Right cardiac atrium (tissue), 5 donors: ENCODE measurements at regions of chr16 and their contacts with region 1.

Region 1: DNA sequence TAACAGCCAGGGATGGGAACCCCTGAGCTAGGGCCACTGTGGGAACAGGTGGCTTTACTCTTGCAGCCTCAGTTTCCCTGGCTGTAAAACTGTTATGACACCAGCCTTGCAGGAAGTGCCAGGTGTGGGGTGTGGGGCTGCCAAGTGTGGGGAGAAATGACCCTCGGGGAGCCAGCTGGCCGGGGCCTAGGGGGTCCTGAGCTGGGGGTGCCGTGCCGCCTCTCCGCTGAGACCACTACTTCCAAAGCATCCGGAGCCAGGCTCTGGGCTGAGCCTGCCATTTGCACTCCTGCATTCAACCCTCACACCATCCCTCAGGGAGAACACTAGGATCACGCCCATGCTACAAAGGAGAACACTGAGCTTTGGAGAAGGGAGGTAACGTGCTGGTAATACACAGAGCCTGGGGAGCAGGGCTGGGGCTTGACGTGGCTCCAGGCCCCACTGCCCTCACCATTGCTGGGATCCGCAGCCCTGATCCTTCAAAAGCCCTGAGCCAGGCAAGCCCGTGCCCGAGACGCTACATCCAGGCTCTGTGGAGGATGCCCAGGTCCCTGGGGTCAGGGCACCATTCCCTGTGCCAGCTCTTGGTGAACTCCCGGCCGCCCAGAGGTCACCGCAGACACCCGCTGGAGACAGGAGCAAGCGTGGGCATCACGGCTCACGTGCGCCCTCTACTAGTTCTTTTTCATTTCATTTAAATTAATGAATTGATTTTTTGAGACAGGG is 28.8 kb upstream of the GINS2 start:
- DNase-seq: peak; percentile 63 to 84 (median 82)
- ATAC-seq: peak; percentile 49 to 68
- H3K4me3 ChIP-seq: no peak overlapping the region
- H3K27ac ChIP-seq: no peak overlapping the region
- H3K4me1 ChIP-seq: no peaks in the 10 kb centered on the region
- H3K27me3 ChIP-seq: no peaks in the 10 kb centered on the region

Region 2: GRCh38 chr16:85114909-85115567 is 602.5 kb before region 1 on chr16:
- intact Hi-C with region 1: loop called in 1 of 4 experiments (anchors 10 kb)
- DNase-seq: peak; percentile 87 to 96 (median 95)
- ATAC-seq: peak; percentile 84 to 87
- H3K4me3 ChIP-seq: no peak overlapping the region
- H3K27ac ChIP-seq: no peak overlapping the region
- H3K4me1 ChIP-seq: no peaks in the 10 kb centered on the region
- H3K27me3 ChIP-seq: no peaks in the 10 kb centered on the region

Region 3: GRCh38 chr16:85262558-85263238 is 454.9 kb before region 1 on chr16:
- intact Hi-C with region 1: loop called in 2 of 4 experiments (anchors 10 kb)
- DNase-seq: peak in 1 of 3 donors; percentile 45
- ATAC-seq: no peak
- H3K4me3 ChIP-seq: no peak overlapping the region
- H3K27ac ChIP-seq: no peak overlapping the region
- H3K4me1 ChIP-seq: no peaks in the 10 kb centered on the region
- H3K27me3 ChIP-seq: no peaks in the 10 kb centered on the region

Region 4: GRCh38 chr16:85275533-85276249 is 441.9 kb before region 1 on chr16:
- intact Hi-C with region 1: loop called in 1 of 4 experiments (anchors 10 kb)
- DNase-seq: peak; percentile 71 to 90 (median 85)
- ATAC-seq: peak; percentile 65 to 70
- H3K4me3 ChIP-seq: no peak overlapping the region
- H3K27ac ChIP-seq: no peak overlapping the region
- H3K4me1 ChIP-seq: peaks cover 2% of the 10 kb centered on the region
- H3K27me3 ChIP-seq: no peaks in the 10 kb centered on the region

Region 5: GRCh38 chr16:85393674-85394483 is 323.7 kb before region 1 on chr16:
- intact Hi-C with region 1: loop called in 1 of 4 experiments (anchors 10 kb)
- DNase-seq: peak; percentile 76 to 91 (median 88)
- ATAC-seq: peak; percentile 5 to 41
- H3K4me3 ChIP-seq: no peak overlapping the region
- H3K27ac ChIP-seq: no peak overlapping the region
- H3K4me1 ChIP-seq: peaks cover 12% of the 10 kb centered on the region
- H3K27me3 ChIP-seq: no peaks in the 10 kb centered on the region